ENCODE measurements at regions of chr22 and their contacts with region 1.

Region 1: GRCh38 chr22:50250555-50251476 is at the start of gene HDAC10:
- DNase-seq: peak; percentile 90 to 93
- ATAC-seq: peak; percentile 80
- H3K4me3 ChIP-seq: peak within 1 kb of the TSS; percentile 6 to 42
- H3K27ac ChIP-seq: peak within 1 kb of the TSS in 1 of 2 donors; percentile 4
- H3K4me1 ChIP-seq: no peaks in the 10 kb centered on the region
- H3K27me3 ChIP-seq: no peaks in the 10 kb centered on the region
- total RNA-seq, gene HDAC10: 19.8 to 47.8 TPM

Region 2: GRCh38 chr22:50326959-50327710 is 76.3 kb after region 1 on chr22 and contains the start of gene DENND6B:
- intact Hi-C with region 1: loop called in 1 of 2 experiments (anchors 5 kb)
- DNase-seq: peak; percentile 87 to 93
- ATAC-seq: peak; percentile 97
- H3K4me3 ChIP-seq: peak within 1 kb of the TSS; percentile 46 to 60
- H3K27ac ChIP-seq: peak within 1 kb of the TSS; percentile 4 to 39
- H3K4me1 ChIP-seq: no peaks in the 10 kb centered on the region
- H3K27me3 ChIP-seq: no peaks in the 10 kb centered on the region
- total RNA-seq, gene DENND6B: 2.3 to 7.0 TPM

Region 3: DNA sequence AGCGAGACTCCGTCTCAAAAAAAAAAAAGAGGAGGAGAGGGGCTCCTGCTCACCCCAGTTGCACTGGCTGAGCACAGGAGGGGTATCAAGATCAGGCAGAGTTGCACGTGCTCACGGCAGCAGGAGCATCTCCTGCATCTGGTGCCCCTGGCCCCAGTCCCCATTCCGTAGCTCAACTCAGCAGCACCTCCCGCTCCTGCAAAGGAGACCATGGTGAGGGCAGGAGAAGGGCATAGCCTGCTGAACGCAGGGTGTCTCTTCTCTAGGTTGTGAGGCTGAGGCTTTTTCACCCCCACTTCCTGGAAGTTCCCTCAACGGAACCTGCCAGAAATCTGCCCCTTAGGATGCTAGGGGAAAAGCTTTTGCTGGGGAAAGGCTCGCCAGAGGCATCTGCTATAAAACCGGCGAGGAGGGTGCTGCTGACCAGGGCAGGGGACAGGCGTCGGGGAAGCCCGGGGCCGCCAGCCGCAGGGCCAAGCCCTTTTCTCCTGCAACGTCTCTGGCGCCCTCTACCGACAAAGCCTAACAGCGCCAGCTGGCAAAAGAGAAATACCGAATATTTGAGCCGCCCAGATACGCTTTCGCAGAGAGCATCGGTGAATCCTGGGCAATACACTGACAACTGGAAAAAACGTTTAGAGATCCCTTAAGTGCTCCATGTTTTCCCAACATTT is 91.3 kb after region 1 on chr22:
- intact Hi-C with region 1: loop called (anchors 2 to 5 kb)
- DNase-seq: peak; percentile 93 to 96
- ATAC-seq: peak; percentile 94
- H3K4me3 ChIP-seq: peak overlapping the region; percentile 17 to 91
- H3K27ac ChIP-seq: no peak overlapping the region
- H3K4me1 ChIP-seq: no peaks in the 10 kb centered on the region
- H3K27me3 ChIP-seq: no peaks in the 10 kb centered on the region